Spleen (tissue), 13 donors: ENCODE measurements at regions of chr14 and their contacts with region 1.

Region 1: GRCh38 chr14:103576371-103577024 is 13.7 kb downstream of the COA8 start:
- DNase-seq: peak; percentile 91
- H3K4me3 ChIP-seq: no peak overlapping the region
- H3K27ac ChIP-seq: peak overlapping the region in 7 of 8 donors; percentile 3 to 84 (median 72)
- H3K4me1 ChIP-seq: peaks cover 6 to 65% (median 42%) of the 10 kb centered on the region in 6 donors
- H3K27me3 ChIP-seq: no peaks in the 10 kb centered on the region
- CTCF ChIP-seq: no peak
- POLR2A ChIP-seq: no peak

Region 2: GRCh38 chr14:103628684-103629502 is 52.4 kb after region 1 on chr14 and contains the start of gene KLC1:
- intact Hi-C with region 1: loop called (anchors 10 kb)
- DNase-seq: peak; percentile 96
- H3K4me3 ChIP-seq: peak within 1 kb of the TSS; percentile 82 to 99 (median 94)
- H3K27ac ChIP-seq: peak within 1 kb of the TSS; percentile 94 to 99 (median 98)
- H3K4me1 ChIP-seq: peaks cover 43 to 91% (median 81%) of the 10 kb centered on the region in 6 donors
- H3K27me3 ChIP-seq: no peaks in the 10 kb centered on the region
- CTCF ChIP-seq: no peak
- POLR2A ChIP-seq: peak in 2 of 3 donors; percentile 53 to 73
- total RNA-seq, gene KLC1: 164 to 333 (median 239) TPM

Region 3: DNA sequence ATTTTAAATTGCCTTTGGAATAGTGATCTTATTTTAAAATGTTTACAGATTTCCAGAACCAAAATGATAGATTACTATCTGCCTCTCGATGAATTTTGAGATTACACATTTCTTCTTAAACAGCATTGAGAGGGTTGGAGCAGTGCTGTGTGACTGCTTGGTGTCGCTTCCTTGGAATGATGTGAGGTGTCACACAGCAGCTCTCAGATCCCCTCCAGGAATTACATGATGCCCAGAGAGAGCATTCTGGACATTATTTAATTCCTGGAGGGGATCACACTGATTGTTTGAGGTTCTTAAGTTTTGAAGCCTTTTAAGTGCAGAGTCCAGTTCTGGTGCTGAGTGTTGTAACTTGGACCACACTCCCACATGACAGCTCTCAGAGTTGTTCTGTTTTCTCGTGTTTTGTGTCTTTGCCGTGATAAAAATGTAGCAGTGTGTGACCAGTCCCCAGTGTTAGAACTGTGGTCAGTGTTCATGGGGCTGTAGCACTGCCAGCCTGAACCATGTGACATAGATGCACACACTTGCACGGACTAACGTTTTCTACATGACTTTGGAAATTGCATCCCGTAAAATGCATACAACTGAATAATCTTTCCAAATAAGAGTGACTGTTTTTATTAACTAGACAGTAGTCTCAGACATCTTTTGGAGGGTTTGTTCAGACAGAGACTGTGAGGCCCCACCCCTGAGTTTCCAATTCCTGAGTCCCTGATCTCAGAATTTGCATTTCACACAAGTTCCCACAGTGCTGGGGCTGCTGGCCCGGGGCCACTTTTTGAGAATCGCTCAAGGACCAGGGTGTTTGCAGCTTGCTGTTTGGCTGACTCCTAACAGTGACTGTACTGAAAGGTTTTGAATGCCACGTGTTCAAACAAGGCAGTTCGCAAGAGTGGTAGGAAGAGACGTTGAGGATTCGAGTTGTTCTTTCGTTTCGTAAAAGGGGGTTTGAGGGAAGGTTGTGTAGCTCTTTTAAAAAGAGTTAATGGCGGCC is 112.7 kb after region 1 on chr14:
- intact Hi-C with region 1: loop called (anchors 10 kb)
- DNase-seq: peak; percentile 84
- H3K4me3 ChIP-seq: peak overlapping the region in 1 of 8 donors; percentile 44
- H3K27ac ChIP-seq: peak overlapping the region in 7 of 8 donors; percentile 4 to 78 (median 72)
- H3K4me1 ChIP-seq: peaks cover 24 to 87% (median 51%) of the 10 kb centered on the region in 6 donors
- H3K27me3 ChIP-seq: no peaks in the 10 kb centered on the region
- CTCF ChIP-seq: no peak
- POLR2A ChIP-seq: no peak

Region 4: DNA sequence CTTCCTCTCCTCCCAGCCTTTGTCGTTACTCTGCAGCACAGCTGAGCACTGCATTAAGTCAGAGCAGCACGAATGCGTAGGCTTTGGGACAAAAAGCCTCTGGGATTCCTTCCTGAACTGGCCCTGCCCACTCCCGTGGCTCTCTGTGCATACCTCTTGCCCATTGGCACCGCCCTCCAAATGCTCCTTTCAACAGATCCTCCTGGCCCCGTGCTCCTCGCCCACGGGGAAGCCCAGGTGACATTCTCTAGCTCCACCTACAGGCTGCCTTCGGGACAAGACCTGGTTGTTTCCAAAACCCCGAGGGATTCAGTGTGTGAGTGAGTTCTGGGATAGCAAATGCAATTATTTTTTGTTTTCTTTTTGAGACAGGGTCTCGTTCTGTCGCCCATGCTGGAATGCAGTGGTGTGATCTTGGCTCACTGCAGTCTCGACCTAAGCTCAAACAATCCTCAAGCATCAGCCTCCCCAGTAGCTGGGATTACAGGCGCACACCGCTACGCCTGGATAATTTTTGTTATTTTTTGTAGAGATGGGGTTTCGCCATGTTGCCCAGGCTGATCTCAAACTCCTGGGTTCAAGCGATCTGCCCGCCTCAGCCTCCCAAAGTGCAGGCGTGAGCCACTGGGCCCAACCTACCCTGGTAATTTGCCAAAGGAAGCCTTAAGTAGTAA is 333.9 kb after region 1 on chr14:
- intact Hi-C with region 1: loop called (anchors 10 kb)
- DNase-seq: peak; percentile 89
- H3K4me3 ChIP-seq: peak overlapping the region in 5 of 8 donors; percentile 6 to 54 (median 17)
- H3K27ac ChIP-seq: peak overlapping the region in 6 of 8 donors; percentile 3 to 48 (median 30)
- H3K4me1 ChIP-seq: peaks cover 8 to 26% (median 13%) of the 10 kb centered on the region in 6 donors
- H3K27me3 ChIP-seq: no peaks in the 10 kb centered on the region
- CTCF ChIP-seq: peak; percentile 41 to 85 (median 76)
- POLR2A ChIP-seq: no peak